H1 (cell line): ENCODE measurements at regions of chr20 and their contacts with region 1.

Region 1: DNA sequence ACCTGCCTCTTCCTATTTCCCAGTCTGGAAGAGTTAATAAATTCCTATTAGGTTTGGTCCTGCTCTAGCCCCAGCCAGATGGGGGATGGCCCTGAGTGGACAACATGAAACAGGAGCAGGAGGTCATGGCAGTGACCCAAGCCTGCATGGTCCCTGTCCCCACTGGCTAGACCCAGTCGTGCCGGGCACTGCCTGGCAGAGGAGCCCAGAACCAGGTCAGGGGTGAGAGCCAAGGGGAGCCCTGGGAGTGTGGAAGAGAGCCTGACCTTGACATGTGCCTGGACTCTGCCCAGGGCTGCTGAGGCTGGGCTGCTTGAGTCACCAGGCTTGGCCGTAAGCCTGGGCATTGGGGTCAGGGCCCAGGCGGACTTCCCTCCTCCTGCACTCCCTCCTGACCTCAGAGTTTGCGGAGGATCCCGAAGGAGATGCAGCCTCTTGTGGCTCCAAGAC is 3.6 kb downstream of the AVP start:
- DNase-seq: no peak
- H3K4me3 ChIP-seq: no peak overlapping the region
- H3K27ac ChIP-seq: no peak overlapping the region
- H3K4me1 ChIP-seq: peaks cover 0 to 8% (median 6%) of the 10 kb centered on the region in 4 experiments; a peak in 5 of 7 replicates
- H3K27me3 ChIP-seq: peaks cover 27 to 43% (median 37%) of the 10 kb centered on the region in 4 experiments
- CTCF ChIP-seq: no peak
- EP300 ChIP-seq: no peak
- POLR2A ChIP-seq: no peak
- RAD21 ChIP-seq: no peak

Region 2: DNA sequence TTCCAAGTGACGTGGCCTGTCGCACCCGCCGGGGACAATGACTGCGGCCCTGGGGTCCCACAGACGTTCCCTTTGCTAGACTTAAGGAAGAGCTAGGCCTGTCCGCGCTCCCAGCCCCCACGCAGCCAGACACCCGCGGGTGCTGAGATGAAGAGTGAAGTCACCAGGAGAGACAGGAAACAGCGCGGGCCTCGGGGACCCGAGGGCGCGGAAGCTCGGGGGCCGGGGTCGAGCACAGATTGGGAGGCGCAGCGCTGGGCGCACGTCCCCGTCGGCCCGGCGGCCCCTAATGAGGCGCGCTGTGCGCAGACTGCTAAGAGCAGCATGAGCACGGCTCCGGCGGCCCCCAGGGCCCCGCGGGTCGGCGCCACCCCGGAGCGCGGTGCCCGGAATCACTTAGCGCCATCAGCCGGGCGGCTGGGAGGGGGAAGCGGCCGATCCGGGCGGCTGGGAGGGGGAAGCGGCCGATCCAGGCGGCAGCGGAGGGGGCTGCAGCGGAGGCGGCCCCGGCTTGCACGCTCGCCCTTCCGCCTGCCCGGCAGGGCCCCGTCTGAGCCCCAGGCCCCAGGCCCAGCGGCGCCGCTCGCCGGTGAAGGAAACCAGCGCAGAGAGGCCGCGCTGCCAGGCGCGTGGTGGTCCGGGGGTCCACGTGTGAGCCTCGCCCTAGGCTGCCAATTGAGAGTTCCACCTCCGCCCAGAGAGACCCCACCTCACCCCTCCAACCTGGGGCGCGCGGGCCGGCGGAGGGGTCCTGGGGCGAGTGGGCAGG is 11.8 kb after region 1 on chr20:
- CTCF ChIA-PET with region 1: interaction called, 6 read pairs
- POLR2A ChIA-PET with region 1: interaction called, 14 read pairs
- DNase-seq: peak in 1 of 2 experiments; percentile 71
- H3K4me3 ChIP-seq: peak overlapping the region; percentile 9 to 61 (median 35)
- H3K27ac ChIP-seq: no peak overlapping the region
- H3K4me1 ChIP-seq: peaks cover 0 to 6% (median 2%) of the 10 kb centered on the region in 4 experiments; a peak in 2 of 7 replicates
- H3K27me3 ChIP-seq: peaks cover 2 to 21% (median 13%) of the 10 kb centered on the region in 4 experiments
- CTCF ChIP-seq: peak in 1 of 3 experiments; percentile 8; a peak in 1 of 4 replicates
- EP300 ChIP-seq: no peak
- POLR2A ChIP-seq: peak in 1 of 2 experiments; percentile 58; a peak in 2 of 3 replicates
- RAD21 ChIP-seq: no peak

Region 3: DNA sequence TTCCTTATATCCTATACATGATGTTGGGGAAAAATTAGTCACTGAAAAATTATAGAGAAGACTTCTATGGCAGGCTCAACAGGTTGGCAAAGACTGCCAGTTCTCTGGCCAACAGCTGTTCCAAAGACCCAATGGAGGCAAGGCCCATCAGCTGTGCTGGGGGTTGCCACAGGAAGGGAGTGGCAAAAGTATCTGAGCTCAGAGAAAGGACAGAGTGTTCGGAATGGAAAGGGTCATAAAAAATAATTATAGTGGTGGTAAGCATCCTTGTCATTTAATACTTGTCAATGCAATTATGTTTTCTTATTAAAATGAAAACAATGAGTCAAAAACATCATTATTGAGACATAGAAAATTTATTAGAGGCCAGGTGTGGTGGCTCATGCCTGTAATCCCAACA is 42.6 kb after region 1 on chr20:
- CTCF ChIA-PET with region 1: no interaction called
- POLR2A ChIA-PET with region 1: no interaction called
- DNase-seq: no peak
- H3K4me3 ChIP-seq: no peak overlapping the region
- H3K27ac ChIP-seq: no peak overlapping the region
- H3K4me1 ChIP-seq: no peaks in the 10 kb centered on the region
- H3K27me3 ChIP-seq: no peaks in the 10 kb centered on the region
- CTCF ChIP-seq: no peak
- EP300 ChIP-seq: no peak
- POLR2A ChIP-seq: no peak
- RAD21 ChIP-seq: no peak